Gastrocnemius medialis (tissue), 4 donors: ENCODE measurements at regions of chr20 and their contacts with region 1.

Region 1: GRCh38 chr20:6590891-6591631 is 176.4 kb upstream of the BMP2 start:
- DNase-seq: no peak
- ATAC-seq: no peak
- H3K4me3 ChIP-seq: no peak overlapping the region
- H3K27ac ChIP-seq: no peak overlapping the region
- H3K4me1 ChIP-seq: peaks cover 0 to 4% of the 10 kb centered on the region in 2 donors
- H3K27me3 ChIP-seq: no peaks in the 10 kb centered on the region
- CTCF ChIP-seq: no peak
- POLR2A ChIP-seq: no peak

Region 2: DNA sequence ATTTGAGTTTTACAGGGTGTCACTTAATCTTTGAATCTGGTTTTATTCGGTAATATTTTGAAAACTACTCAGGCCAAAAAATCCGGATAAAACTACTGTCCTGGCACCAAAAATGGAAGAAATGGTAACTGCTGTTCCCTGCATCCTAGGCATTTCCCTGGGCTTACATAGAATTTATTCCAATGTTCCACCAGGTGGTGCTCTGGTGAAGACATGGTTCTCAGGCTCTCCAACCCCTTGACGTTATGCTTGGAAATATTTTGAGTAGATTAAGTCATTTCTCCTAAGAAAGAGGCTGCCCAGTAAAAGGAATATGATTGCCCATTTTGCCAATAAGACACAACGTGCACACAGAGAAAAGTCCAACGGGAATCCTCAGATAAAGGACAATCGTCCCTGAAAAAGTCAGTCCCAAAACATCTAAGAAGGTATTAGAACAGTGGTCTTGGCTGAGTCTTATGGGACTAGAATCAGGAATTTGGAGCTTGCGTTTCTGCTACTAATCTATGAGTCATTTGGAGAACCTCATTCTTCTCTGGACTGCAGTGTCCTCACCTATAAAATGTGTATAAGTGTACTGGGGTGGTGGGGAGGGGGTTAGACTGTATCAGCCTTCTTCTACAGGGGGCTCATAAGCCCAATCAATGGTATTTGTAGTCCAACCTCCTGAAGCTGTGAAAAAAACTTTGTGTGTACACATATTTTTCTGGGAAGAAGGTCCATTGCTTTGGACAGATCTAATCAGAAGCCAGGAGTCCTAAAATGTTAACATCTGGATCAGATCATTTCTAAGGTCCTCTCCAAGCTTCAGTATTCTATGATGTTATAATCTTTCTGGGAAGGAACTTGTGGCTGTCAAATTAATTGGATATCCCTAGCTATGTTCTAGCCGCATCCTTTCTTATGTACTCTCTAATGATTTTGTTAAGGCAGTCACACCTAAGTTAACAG is 45.4 kb after region 1 on chr20:
- in situ Hi-C with region 1: no loop called
- intact Hi-C with region 1: loop called (anchors 5 kb)
- DNase-seq: peak in 1 of 2 donors; percentile 14
- ATAC-seq: peak; percentile 73 to 75
- H3K4me3 ChIP-seq: no peak overlapping the region
- H3K27ac ChIP-seq: peak overlapping the region in 3 of 4 donors; percentile 3 to 26 (median 7)
- H3K4me1 ChIP-seq: no peaks in the 10 kb centered on the region
- H3K27me3 ChIP-seq: no peaks in the 10 kb centered on the region
- CTCF ChIP-seq: peak in 3 of 5 experiments; percentile 18 to 41 (median 30)
- POLR2A ChIP-seq: no peak